ENCODE measurements at regions of chr6 and their contacts with region 1.

Region 1: GRCh38 chr6:150600301-150601017 is 774 bp downstream of the PLEKHG1 start:
- DNase-seq: peak; percentile 82
- ATAC-seq: peak; percentile 70
- H3K4me3 Mint-ChIP-seq: peak overlapping the region; percentile 98
- H3K27ac Mint-ChIP-seq: peak overlapping the region; percentile 97
- H3K4me1 Mint-ChIP-seq: peaks cover 68% of the 10 kb centered on the region
- H3K27me3 Mint-ChIP-seq: no peaks in the 10 kb centered on the region
- CTCF ChIP-seq: no peak

Region 2: DNA sequence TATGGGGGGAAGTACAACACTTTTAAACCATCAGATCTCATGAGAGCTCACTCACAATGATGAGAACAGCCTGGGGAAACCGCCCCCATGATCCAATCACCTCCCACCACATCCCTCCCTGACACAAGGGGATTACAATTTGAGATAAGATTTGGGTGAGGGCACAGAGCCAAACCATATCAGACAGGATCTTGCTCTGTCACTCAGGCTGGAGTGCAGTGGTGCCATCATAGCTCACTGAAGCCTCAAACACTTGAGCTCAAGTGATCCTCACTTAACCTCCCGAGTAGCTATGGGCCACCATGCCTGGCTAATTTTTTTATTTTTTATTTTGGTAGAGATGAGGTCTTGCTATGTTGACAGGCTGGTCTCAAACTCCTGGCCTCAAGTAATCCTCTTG is 236.7 kb before region 1 on chr6:
- CTCF ChIA-PET with region 1: no interaction called
- POLR2A ChIA-PET with region 1: no interaction called
- intact Hi-C with region 1: no loop called
- DNase-seq: no peak
- ATAC-seq: no peak
- H3K4me3 Mint-ChIP-seq: no peak overlapping the region
- H3K27ac Mint-ChIP-seq: no peak overlapping the region
- H3K4me1 Mint-ChIP-seq: no peaks in the 10 kb centered on the region
- H3K27me3 Mint-ChIP-seq: peaks cover 10% of the 10 kb centered on the region
- CTCF ChIP-seq: no peak

Region 3: GRCh38 chr6:150491131-150491810 is 109.2 kb before region 1 on chr6:
- CTCF ChIA-PET with region 1: no interaction called
- POLR2A ChIA-PET with region 1: interaction called, 3 read pairs
- intact Hi-C with region 1: loop called (anchors 5 kb)
- DNase-seq: no peak
- ATAC-seq: peak; percentile 77
- H3K4me3 Mint-ChIP-seq: no peak overlapping the region
- H3K27ac Mint-ChIP-seq: peak overlapping the region; percentile 70
- H3K4me1 Mint-ChIP-seq: peaks cover 16% of the 10 kb centered on the region
- H3K27me3 Mint-ChIP-seq: no peaks in the 10 kb centered on the region
- CTCF ChIP-seq: no peak

Region 4: GRCh38 chr6:150622941-150623874 is 22.7 kb after region 1 on chr6:
- CTCF ChIA-PET with region 1: interaction called, 19 read pairs
- POLR2A ChIA-PET with region 1: interaction called, 177 read pairs
- intact Hi-C with region 1: loop called (anchors 1 kb)
- DNase-seq: peak; percentile 40
- ATAC-seq: peak; percentile 87
- H3K4me3 Mint-ChIP-seq: peak overlapping the region; percentile 19
- H3K27ac Mint-ChIP-seq: peak overlapping the region; percentile 94
- H3K4me1 Mint-ChIP-seq: peaks cover 97% of the 10 kb centered on the region
- H3K27me3 Mint-ChIP-seq: no peaks in the 10 kb centered on the region
- CTCF ChIP-seq: no peak

Region 5: GRCh38 chr6:150685860-150686259 is 85.4 kb after region 1 on chr6:
- CTCF ChIA-PET with region 1: interaction called, 15 read pairs
- POLR2A ChIA-PET with region 1: interaction called, 62 read pairs
- intact Hi-C with region 1: loop called (anchors 2 kb)
- DNase-seq: no peak
- ATAC-seq: peak; percentile 32
- H3K4me3 Mint-ChIP-seq: no peak overlapping the region
- H3K27ac Mint-ChIP-seq: peak overlapping the region; percentile 85
- H3K4me1 Mint-ChIP-seq: peaks cover 95% of the 10 kb centered on the region
- H3K27me3 Mint-ChIP-seq: no peaks in the 10 kb centered on the region
- CTCF ChIP-seq: no peak

Region 6: DNA sequence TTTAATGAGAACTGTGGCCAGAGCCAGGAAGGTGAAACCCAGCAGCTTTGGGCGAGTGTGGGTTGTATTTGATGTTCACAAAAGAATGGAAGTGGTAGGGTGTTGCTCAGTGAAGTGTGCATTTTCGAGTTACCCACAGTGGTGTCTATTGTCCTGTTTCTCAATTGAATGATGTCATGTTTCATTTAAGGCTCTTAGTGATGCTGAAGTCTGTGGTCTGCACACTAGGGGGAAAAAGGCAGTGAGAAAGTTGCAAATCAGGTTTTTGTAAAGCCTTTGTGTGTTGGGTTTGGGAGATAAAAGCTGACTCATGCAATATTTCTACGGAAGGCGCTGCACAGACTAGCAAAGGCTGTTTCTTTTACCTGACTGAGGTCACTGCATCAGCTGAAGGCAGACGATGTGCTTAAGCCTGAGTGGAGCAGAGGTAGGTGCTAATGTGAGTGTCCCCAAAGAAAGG is 120.3 kb after region 1 on chr6:
- CTCF ChIA-PET with region 1: interaction called, 3 read pairs
- POLR2A ChIA-PET with region 1: interaction called, 7 read pairs
- intact Hi-C with region 1: loop called (anchors 5 kb)
- DNase-seq: no peak
- ATAC-seq: peak; percentile 96
- H3K4me3 Mint-ChIP-seq: peak overlapping the region; percentile 25
- H3K27ac Mint-ChIP-seq: peak overlapping the region; percentile 80
- H3K4me1 Mint-ChIP-seq: peaks cover 74% of the 10 kb centered on the region
- H3K27me3 Mint-ChIP-seq: no peaks in the 10 kb centered on the region
- CTCF ChIP-seq: no peak

Region 7: GRCh38 chr6:150813319-150813992 is 213.0 kb after region 1 on chr6:
- CTCF ChIA-PET with region 1: interaction called, 9 read pairs
- POLR2A ChIA-PET with region 1: interaction called, 40 read pairs
- intact Hi-C with region 1: loop called (anchors 1 kb)
- DNase-seq: peak; percentile 22
- ATAC-seq: peak; percentile 79
- H3K4me3 Mint-ChIP-seq: peak overlapping the region; percentile 69
- H3K27ac Mint-ChIP-seq: peak overlapping the region; percentile 99
- H3K4me1 Mint-ChIP-seq: peaks cover 32% of the 10 kb centered on the region
- H3K27me3 Mint-ChIP-seq: no peaks in the 10 kb centered on the region
- CTCF ChIP-seq: no peak

Measured in activated B cell treated with CpG ODN at 0.5 μM for 24 hours (primary cell).